HAP-1 (cell line): ENCODE measurements at regions of chr19 and their contacts with region 1.

Region 1: GRCh38 chr19:2273356-2274184 is 8.4 kb downstream of the PEAK3 start:
- DNase-seq: peak; percentile 92 to 96
- H3K4me3 ChIP-seq: peak overlapping the region; percentile 99
- H3K4me1 ChIP-seq: peaks cover 15% of the 10 kb centered on the region
- H3K27me3 ChIP-seq: no peaks in the 10 kb centered on the region

Region 2: GRCh38 chr19:2084993-2085720 is 188.4 kb before region 1 on chr19:
- in situ Hi-C with region 1: no loop called
- DNase-seq: no peak
- H3K4me3 ChIP-seq: no peak overlapping the region
- H3K4me1 ChIP-seq: no peaks in the 10 kb centered on the region
- H3K27me3 ChIP-seq: no peaks in the 10 kb centered on the region

Region 3: DNA sequence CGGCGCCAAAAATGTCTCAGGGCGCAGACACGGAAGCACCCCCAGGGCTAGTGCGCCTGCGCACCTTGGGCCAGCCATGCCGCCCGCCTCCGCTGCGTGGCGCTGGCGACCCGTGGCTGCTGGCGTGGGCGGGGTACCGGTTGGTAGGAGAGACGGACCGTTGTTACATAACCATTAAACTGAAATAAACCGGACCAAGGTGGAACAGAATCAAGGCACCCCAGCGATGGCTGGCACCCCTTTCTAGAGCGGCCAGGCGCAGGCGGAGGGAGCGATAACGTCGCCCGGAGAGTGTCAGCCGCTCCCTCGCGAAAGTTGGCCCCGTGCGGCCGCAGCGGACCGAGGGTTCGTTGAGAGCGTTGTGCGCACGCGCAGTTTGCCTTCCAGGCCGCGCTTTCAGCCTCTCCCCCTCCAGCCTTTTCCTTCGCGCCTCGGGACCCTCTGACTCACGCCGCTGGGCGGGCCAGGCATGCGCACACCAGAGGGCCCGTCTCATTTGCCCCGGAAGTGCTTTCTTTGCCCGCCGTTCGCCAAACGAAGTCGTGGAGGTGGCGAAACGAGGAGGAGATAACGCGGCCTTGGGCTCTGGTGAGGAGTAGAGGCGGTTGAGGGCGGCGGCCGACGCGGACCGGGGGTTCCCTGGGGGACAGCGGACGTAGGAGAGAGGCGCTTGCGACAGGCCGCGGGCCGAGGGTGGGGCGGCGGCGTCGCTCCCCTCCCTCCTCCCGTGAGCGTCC is 37.1 kb before region 1 on chr19 and contains the starts of genes PLEKHJ1 and SF3A2:
- in situ Hi-C with region 1: loop called (anchors 5 kb)
- DNase-seq: peak; percentile 95 to 98
- H3K4me3 ChIP-seq: peak within 1 kb of the TSS; percentile 83
- H3K4me1 ChIP-seq: peaks cover 18% of the 10 kb centered on the region
- H3K27me3 ChIP-seq: no peaks in the 10 kb centered on the region